Psoas muscle (tissue), 8 donors: ENCODE measurements at regions of chr7 and their contacts with region 1.

Region 1: GRCh38 chr7:6015917-6016652 is 7.0 kb downstream of the AIMP2 start:
- DNase-seq: peak; percentile 86 to 95
- ATAC-seq: peak; percentile 67 to 84 (median 79)
- H3K4me3 ChIP-seq: peak overlapping the region; percentile 32
- H3K27ac ChIP-seq: peak overlapping the region; percentile 91
- H3K4me1 ChIP-seq: peaks cover 62% of the 10 kb centered on the region
- H3K27me3 ChIP-seq: no peaks in the 10 kb centered on the region
- CTCF ChIP-seq: no peak

Region 2: GRCh38 chr7:5421714-5422395 is 594.2 kb before region 1 on chr7:
- intact Hi-C with region 1: no loop called
- DNase-seq: peak; percentile 57 to 67
- ATAC-seq: no peak
- H3K4me3 ChIP-seq: peak overlapping the region; percentile 99
- H3K27ac ChIP-seq: peak overlapping the region; percentile 100
- H3K4me1 ChIP-seq: peaks cover 11% of the 10 kb centered on the region
- H3K27me3 ChIP-seq: no peaks in the 10 kb centered on the region
- CTCF ChIP-seq: no peak

Region 3: GRCh38 chr7:6435486-6436384 is 419.6 kb after region 1 on chr7:
- intact Hi-C with region 1: loop called in 1 of 2 experiments (anchors 10 kb)
- DNase-seq: peak; percentile 79 to 90
- ATAC-seq: peak; percentile 28 to 74 (median 66)
- H3K4me3 ChIP-seq: no peak overlapping the region
- H3K27ac ChIP-seq: peak overlapping the region; percentile 84
- H3K4me1 ChIP-seq: peaks cover 55% of the 10 kb centered on the region
- H3K27me3 ChIP-seq: no peaks in the 10 kb centered on the region
- CTCF ChIP-seq: peak; percentile 98

Region 4: DNA sequence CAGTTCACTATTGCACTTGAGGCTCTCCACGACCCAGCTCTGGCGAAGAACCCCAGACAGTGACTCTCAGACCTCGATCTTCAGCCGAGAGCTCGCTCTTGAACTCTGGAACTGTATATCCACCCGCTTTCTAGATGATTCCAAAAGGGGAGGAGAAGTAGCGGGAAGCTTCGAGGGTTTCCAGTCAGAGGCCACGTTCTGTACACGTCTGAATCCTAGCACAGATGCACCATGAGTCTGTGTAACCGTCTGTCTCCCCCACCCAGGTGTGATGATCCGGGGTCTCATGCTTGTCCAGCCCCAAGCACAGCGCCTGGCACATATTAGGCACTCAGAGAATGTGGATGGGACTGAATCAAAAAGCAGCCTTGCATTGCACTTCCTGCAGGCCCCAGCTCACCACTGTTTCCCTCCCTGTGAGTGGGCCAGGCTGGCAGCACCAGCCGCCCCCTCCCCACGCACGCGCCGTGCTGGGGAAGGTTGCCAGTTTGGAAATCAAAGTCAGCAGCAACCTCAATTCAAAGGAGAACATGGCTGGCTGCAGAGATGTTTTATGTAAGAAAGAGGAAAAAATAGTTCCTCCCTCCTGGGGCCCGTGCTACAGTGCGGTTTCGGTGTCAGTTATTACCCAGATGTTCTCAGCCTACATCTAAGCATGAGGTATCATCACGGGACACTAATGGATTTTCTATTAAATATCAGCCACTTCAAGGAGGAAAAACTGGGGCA is 529.5 kb after region 1 on chr7:
- intact Hi-C with region 1: no loop called
- DNase-seq: no peak
- ATAC-seq: no peak
- H3K4me3 ChIP-seq: no peak overlapping the region
- H3K27ac ChIP-seq: no peak overlapping the region
- H3K4me1 ChIP-seq: no peaks in the 10 kb centered on the region
- H3K27me3 ChIP-seq: peaks cover 0 to 2% (median 0%) of the 10 kb centered on the region in 3 donors
- CTCF ChIP-seq: no peak